ENCODE measurements at regions of chr6 and their contacts with region 1.

Region 1: GRCh38 chr6:5030596-5031136 is 26.8 kb upstream of the RPP40 start:
- DNase-seq: peak; percentile 85
- H3K4me3 ChIP-seq: no peak overlapping the region
- H3K27ac ChIP-seq: no peak overlapping the region
- H3K4me1 ChIP-seq: no peaks in the 10 kb centered on the region
- CTCF ChIP-seq: peak; percentile 86

Region 2: GRCh38 chr6:4313044-4313686 is 717.5 kb before region 1 on chr6:
- CTCF ChIA-PET with region 1: no interaction called
- POLR2A ChIA-PET with region 1: no interaction called
- intact Hi-C with region 1: loop called (anchors 5 kb)
- DNase-seq: peak; percentile 13
- H3K4me3 ChIP-seq: no peak overlapping the region
- H3K27ac ChIP-seq: no peak overlapping the region
- H3K4me1 ChIP-seq: no peaks in the 10 kb centered on the region
- CTCF ChIP-seq: peak; percentile 69

Region 3: DNA sequence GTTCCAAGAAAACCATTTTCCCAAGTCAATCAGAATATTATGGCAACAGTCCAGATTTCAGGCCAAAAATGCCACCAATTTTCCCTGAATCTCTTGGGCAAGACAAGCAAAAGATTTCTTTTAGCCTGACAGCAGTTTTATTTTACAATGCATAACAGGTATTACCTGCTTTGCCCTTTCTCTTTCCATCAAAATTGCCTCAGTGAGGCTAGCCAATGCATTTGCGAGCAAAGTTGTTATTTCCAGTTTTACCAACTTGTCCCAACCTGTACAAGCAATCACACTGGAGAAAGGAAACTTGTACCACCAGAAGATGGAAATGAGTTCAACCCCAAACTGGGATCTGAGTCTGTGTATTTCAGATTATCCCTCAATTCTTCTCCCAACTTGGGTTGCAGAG is 534.4 kb before region 1 on chr6:
- CTCF ChIA-PET with region 1: no interaction called
- POLR2A ChIA-PET with region 1: no interaction called
- intact Hi-C with region 1: no loop called
- DNase-seq: no peak
- H3K4me3 ChIP-seq: no peak overlapping the region
- H3K27ac ChIP-seq: no peak overlapping the region
- H3K4me1 ChIP-seq: no peaks in the 10 kb centered on the region
- CTCF ChIP-seq: no peak

Region 4: GRCh38 chr6:4948781-4949450 is 81.8 kb before region 1 on chr6:
- CTCF ChIA-PET with region 1: no interaction called
- POLR2A ChIA-PET with region 1: no interaction called
- intact Hi-C with region 1: no loop called
- DNase-seq: no peak
- H3K4me3 ChIP-seq: no peak overlapping the region
- H3K27ac ChIP-seq: no peak overlapping the region
- H3K4me1 ChIP-seq: no peaks in the 10 kb centered on the region
- CTCF ChIP-seq: no peak

Region 5: GRCh38 chr6:5246141-5247097 is 215.8 kb after region 1 on chr6:
- CTCF ChIA-PET with region 1: no interaction called
- POLR2A ChIA-PET with region 1: no interaction called
- intact Hi-C with region 1: no loop called
- DNase-seq: no peak
- H3K4me3 ChIP-seq: no peak overlapping the region
- H3K27ac ChIP-seq: no peak overlapping the region
- H3K4me1 ChIP-seq: no peaks in the 10 kb centered on the region
- CTCF ChIP-seq: no peak